Activated CD4-positive, alpha-beta memory T cell treated with anti-CD3 and anti-CD28 coated beads, Interleukin-2, amount 10 ng/mL, durations not matched to agents 7 days and 5 days (primary cell): ENCODE measurements at regions of chr2 and their contacts with region 1.

Region 1: GRCh38 chr2:236512902-236513435 is 56.7 kb upstream of the ACKR3 start:
- DNase-seq: peak; percentile 79
- H3K4me3 Mint-ChIP-seq: no peak overlapping the region
- H3K27ac Mint-ChIP-seq: no peak overlapping the region
- H3K4me1 Mint-ChIP-seq: no peaks in the 10 kb centered on the region
- H3K27me3 Mint-ChIP-seq: peaks cover 31% of the 10 kb centered on the region

Region 2: DNA sequence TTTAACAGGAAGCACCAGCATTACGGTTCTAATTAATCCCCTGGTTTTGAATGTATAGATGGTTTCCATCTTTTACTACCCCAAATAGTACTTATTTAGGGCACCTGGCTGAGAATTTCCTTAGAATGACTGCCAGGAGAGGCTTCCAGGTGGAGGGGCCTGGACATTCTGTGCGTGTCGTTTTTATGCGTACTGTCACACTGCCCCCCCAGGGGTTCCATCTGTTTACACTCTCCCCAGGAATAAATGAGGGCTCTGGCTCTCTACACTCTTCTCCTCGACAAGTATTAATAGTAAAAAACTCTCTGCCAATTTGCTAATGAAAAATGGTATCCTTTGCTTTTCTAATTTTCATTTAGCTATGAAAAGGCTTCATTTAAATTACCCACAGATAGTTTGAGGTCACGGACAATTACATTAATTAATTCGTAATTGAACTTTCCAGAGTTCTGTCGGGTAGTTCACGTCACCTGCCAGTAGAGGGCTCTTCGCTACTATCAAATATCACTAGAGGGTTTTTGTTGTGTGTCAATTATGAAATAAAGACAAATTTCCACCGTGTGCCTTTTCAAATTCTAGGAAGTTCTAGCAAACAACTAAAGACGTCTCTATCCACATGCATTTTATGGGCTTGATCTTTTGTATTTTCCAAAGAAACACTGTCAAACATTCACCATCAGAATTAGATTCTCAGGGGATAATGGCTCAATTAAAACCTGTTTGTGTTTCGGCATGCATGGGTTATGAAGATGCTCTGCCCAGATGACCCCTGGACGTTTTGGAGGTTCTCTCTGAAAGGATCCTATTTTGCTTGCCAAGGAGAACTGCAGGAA is 160.0 kb before region 1 on chr2:
- CTCF ChIA-PET with region 1: interaction called, 10 read pairs
- POLR2A ChIA-PET with region 1: no interaction called
- DNase-seq: peak; percentile 32
- H3K4me3 Mint-ChIP-seq: no peak overlapping the region
- H3K27ac Mint-ChIP-seq: no peak overlapping the region
- H3K4me1 Mint-ChIP-seq: peaks cover 2% of the 10 kb centered on the region
- H3K27me3 Mint-ChIP-seq: peaks cover 4% of the 10 kb centered on the region

Region 3: DNA sequence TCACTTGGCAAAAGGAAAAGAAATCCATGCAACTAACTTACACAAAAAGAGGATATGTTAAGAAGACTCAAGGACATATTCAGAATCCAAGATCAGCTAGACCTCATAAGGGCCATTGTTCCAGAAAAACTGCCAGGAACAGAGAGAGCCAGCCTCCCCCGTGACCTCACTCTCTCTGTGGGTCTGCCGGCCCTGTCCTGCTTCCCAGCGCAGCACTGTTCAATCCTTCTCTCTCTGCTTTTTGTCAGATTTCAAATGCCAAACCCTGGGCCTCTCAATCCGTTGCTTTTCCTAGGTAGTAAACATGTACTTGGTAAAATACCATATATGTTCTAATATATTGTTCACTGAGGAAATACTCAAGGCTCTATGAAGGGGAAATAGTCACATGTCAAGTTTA is 16.6 kb after region 1 on chr2:
- CTCF ChIA-PET with region 1: interaction called, 10 read pairs
- POLR2A ChIA-PET with region 1: no interaction called
- DNase-seq: no peak
- H3K4me3 Mint-ChIP-seq: no peak overlapping the region
- H3K27ac Mint-ChIP-seq: no peak overlapping the region
- H3K4me1 Mint-ChIP-seq: no peaks in the 10 kb centered on the region
- H3K27me3 Mint-ChIP-seq: peaks cover 16% of the 10 kb centered on the region

Region 4: GRCh38 chr2:236545814-236546480 is 33.0 kb after region 1 on chr2:
- CTCF ChIA-PET with region 1: interaction called, 14 read pairs
- POLR2A ChIA-PET with region 1: interaction called, 3 read pairs
- DNase-seq: peak; percentile 42
- H3K4me3 Mint-ChIP-seq: peak overlapping the region; percentile 63
- H3K27ac Mint-ChIP-seq: peak overlapping the region; percentile 98
- H3K4me1 Mint-ChIP-seq: peaks cover 80% of the 10 kb centered on the region
- H3K27me3 Mint-ChIP-seq: no peaks in the 10 kb centered on the region

Region 5: DNA sequence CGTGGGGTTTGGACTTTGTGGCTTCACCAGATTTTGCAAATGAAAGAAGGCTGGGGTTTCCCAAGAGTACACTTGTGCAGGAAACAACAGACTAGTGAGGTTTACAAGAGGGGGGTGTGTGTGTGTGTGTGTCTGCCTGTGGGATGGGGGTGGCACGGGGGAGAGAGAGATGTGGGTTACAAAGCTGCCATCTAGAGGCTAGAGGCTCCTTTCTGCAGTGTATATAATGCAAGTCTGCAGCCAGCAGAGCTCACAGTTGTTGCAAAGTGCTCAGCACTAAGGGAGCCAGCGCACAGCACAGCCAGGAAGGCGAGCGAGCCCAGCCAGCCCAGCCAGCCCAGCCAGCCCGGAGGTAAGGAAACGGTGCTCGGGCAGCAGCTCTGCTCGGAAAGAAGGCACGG is 56.6 kb after region 1 on chr2 and contains the start of gene ACKR3:
- CTCF ChIA-PET with region 1: interaction called, 205 read pairs
- POLR2A ChIA-PET with region 1: interaction called, 16 read pairs
- DNase-seq: peak; percentile 73
- H3K4me3 Mint-ChIP-seq: no peak within 1 kb of the TSS
- H3K27ac Mint-ChIP-seq: no peak within 1 kb of the TSS
- H3K4me1 Mint-ChIP-seq: peaks cover 24% of the 10 kb centered on the region
- H3K27me3 Mint-ChIP-seq: peaks cover 30% of the 10 kb centered on the region
- total RNA-seq, gene ACKR3: 2.5 to 2.7 TPM